ENCODE measurements at regions of chr7 and their contacts with region 1.

Region 1: DNA sequence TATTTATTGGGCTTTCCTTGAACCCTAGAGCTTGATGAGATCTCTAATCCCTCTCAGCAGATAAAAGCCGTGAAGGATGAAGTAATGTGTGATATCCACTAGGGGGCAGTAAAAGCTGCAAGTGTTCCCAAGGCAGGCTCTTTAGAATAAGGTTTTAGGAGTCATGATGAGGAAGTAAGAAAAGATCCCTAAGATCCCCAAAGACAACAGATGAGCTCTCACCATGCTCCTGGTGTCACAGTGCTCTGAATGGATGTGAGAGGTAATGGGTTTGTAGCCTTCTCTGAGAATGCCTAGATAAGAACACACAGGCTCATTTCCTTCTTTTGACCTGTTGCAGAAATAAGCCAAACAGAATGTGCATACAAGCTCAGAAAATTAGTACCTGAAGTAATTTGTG is 70.4 kb upstream of the ITPRID1 start:
- DNase-seq: no peak
- ATAC-seq: no peak
- H3K4me3 Mint-ChIP-seq: no peak overlapping the region
- H3K27ac Mint-ChIP-seq: no peak overlapping the region
- H3K4me1 Mint-ChIP-seq: no peaks in the 10 kb centered on the region
- H3K27me3 Mint-ChIP-seq: no peaks in the 10 kb centered on the region
- CTCF ChIP-seq: peak; percentile 72

Region 2: DNA sequence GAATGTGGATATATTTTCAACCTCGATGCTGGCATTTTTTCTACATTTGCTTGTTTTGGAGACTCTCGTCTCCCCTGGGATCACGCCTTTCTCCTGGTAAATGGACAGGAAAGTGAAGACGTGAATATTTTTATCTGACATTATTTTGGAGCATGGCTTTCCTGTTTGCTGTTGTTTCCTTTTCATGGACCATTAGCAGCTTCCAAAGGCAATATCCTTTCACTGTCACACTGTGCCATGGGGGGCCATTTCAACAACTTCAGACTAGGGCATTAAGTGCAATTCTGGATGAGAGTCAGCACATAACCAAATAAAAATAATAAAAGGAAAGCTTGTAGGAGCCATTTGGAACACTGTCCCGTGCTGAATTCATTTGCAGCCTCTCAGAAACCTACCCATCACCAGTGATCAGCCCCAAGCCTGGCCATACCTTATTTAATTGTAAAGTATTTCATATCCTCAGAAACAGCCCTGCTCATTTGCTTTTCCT is 27.0 kb before region 1 on chr7:
- CTCF ChIA-PET with region 1: interaction called, 11 read pairs
- POLR2A ChIA-PET with region 1: no interaction called
- intact Hi-C with region 1: no loop called
- DNase-seq: no peak
- ATAC-seq: no peak
- H3K4me3 Mint-ChIP-seq: no peak overlapping the region
- H3K27ac Mint-ChIP-seq: no peak overlapping the region
- H3K4me1 Mint-ChIP-seq: no peaks in the 10 kb centered on the region
- H3K27me3 Mint-ChIP-seq: no peaks in the 10 kb centered on the region
- CTCF ChIP-seq: no peak

Region 3: GRCh38 chr7:31488562-31489203 is 45.2 kb after region 1 on chr7:
- CTCF ChIA-PET with region 1: no interaction called
- POLR2A ChIA-PET with region 1: no interaction called
- intact Hi-C with region 1: loop called (anchors 5 kb)
- DNase-seq: peak; percentile 62
- ATAC-seq: peak; percentile 58
- H3K4me3 Mint-ChIP-seq: no peak overlapping the region
- H3K27ac Mint-ChIP-seq: no peak overlapping the region
- H3K4me1 Mint-ChIP-seq: no peaks in the 10 kb centered on the region
- H3K27me3 Mint-ChIP-seq: no peaks in the 10 kb centered on the region
- CTCF ChIP-seq: peak; percentile 60

Measured in activated CD8-positive, alpha-beta T cell treated with anti-CD3 and anti-CD28 coated beads for 36 hours (primary cell).